ENCODE measurements at regions of chr12 and their contacts with region 1.

Region 1: GRCh38 chr12:4091016-4091743 is 182.4 kb upstream of the CCND2 start:
- DNase-seq: no peak
- ATAC-seq: no peak
- H3K4me3 ChIP-seq: no peak overlapping the region
- H3K27ac ChIP-seq: no peak overlapping the region
- H3K4me1 ChIP-seq: no peaks in the 10 kb centered on the region
- H3K27me3 ChIP-seq: no peaks in the 10 kb centered on the region; the same call in 1 of the 2 replicates
- CTCF ChIP-seq: no peak

Region 2: DNA sequence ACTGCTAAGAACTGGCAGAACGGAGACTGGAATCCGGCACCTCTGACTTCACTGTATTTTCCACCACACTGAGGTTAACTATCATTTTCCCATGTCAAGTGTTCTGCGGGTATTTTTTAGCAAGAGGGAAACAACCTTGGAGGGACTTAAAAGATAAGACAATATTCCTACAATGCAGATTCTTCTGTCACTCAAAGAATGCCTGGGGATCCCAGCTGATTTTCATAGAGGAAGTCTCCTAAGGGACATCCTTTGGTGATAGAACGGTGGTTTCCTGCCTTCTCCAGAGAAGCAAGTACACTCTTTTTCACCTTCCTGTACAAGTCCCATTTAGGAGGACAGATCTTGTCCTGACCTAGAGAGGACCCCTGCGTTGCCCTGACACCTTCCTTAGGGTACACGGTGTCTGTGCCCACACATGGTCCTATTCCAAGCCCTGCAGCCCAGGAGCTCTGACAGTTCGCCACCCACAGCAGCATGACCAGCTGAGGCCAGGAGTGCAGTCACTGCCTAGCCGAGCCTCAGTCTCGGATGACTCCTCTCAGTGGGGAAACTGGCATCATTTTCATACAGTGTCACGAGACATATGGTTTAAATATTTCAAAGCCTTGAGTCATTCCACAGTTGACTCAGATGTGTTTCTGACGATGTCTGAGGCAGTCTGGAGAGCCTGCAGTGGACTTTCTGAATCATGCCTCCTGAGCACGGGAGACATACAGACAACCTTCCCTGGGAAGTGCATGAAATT is 1477.7 kb before region 1 on chr12:
- CTCF ChIA-PET with region 1: no interaction called
- POLR2A ChIA-PET with region 1: interaction called, 11 read pairs
- in situ Hi-C with region 1: no loop called
- intact Hi-C with region 1: no loop called
- DNase-seq: peak; percentile 67
- ATAC-seq: peak; percentile 45; the same call in 1 of the 2 replicates
- H3K4me3 ChIP-seq: no peak overlapping the region
- H3K27ac ChIP-seq: no peak overlapping the region
- H3K4me1 ChIP-seq: no peaks in the 10 kb centered on the region
- H3K27me3 ChIP-seq: no peaks in the 10 kb centered on the region
- CTCF ChIP-seq: no peak

Region 3: DNA sequence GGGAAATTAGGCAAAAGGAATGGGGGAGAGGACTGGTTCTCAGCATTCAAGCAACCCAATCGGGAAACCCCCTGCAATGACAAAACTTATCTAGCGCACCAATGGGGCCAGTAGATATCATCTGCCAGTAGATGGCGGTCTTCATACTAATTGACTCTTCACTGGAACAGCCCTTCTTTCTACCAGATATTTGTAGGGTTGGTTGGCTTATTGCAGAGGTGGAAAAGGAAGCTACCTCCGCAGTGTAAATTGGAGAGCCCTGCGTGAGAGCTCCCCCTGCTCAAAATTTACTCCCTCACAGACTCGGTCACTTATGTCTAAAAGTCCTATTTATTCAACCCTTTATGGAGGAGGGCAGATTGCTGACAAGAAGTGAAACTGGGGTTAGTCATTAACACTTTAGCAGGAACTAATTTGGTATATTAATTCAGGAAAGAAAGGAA is 16.3 kb after region 1 on chr12:
- CTCF ChIA-PET with region 1: no interaction called
- POLR2A ChIA-PET with region 1: no interaction called
- in situ Hi-C with region 1: no loop called
- intact Hi-C with region 1: no loop called
- DNase-seq: peak; percentile 12
- ATAC-seq: peak; percentile 60; the same call in 1 of the 2 replicates
- H3K4me3 ChIP-seq: no peak overlapping the region
- H3K27ac ChIP-seq: no peak overlapping the region
- H3K4me1 ChIP-seq: no peaks in the 10 kb centered on the region
- H3K27me3 ChIP-seq: no peaks in the 10 kb centered on the region; the same call in 1 of the 2 replicates
- CTCF ChIP-seq: peak; percentile 59